ENCODE measurements at regions of chr2 and their contacts with region 1.

Region 1: GRCh38 chr2:171893824-171894611 is at the start of gene SLC25A12:
- DNase-seq: peak; percentile 92
- H3K4me3 ChIP-seq: peak within 1 kb of the TSS; percentile 86
- H3K27ac ChIP-seq: peak within 1 kb of the TSS; percentile 39
- H3K4me1 ChIP-seq: peaks cover 17% of the 10 kb centered on the region
- CTCF ChIP-seq: no peak
- total RNA-seq, gene SLC25A12: 21.0 and 28.1 TPM in 2 replicates

Region 2: GRCh38 chr2:171882089-171882769 is 11.8 kb before region 1 on chr2:
- CTCF ChIA-PET with region 1: no interaction called
- POLR2A ChIA-PET with region 1: interaction called, 24 read pairs
- intact Hi-C with region 1: no loop called
- DNase-seq: no peak
- H3K4me3 ChIP-seq: no peak overlapping the region
- H3K27ac ChIP-seq: no peak overlapping the region
- H3K4me1 ChIP-seq: no peaks in the 10 kb centered on the region
- CTCF ChIP-seq: no peak

Measured in OCI-LY7 (cell line).